Calu3 (cell line): ENCODE measurements at regions of chr4 and their contacts with region 1.

Region 1: GRCh38 chr4:42865572-42866189 is 26.8 kb upstream of the GRXCR1 start:
- DNase-seq: peak; percentile 44
- H3K4me3 Mint-ChIP-seq: no peak overlapping the region
- H3K27ac Mint-ChIP-seq: no peak overlapping the region
- H3K4me1 Mint-ChIP-seq: no peaks in the 10 kb centered on the region
- H3K27me3 Mint-ChIP-seq: no peaks in the 10 kb centered on the region
- CTCF ChIP-seq: peak; percentile 32

Region 2: GRCh38 chr4:42568610-42569207 is 297.0 kb before region 1 on chr4:
- CTCF ChIA-PET with region 1: interaction called, 3 read pairs
- intact Hi-C with region 1: loop called (anchors 1 kb)
- DNase-seq: peak; percentile 53
- H3K4me3 Mint-ChIP-seq: no peak overlapping the region
- H3K27ac Mint-ChIP-seq: no peak overlapping the region
- H3K4me1 Mint-ChIP-seq: no peaks in the 10 kb centered on the region
- H3K27me3 Mint-ChIP-seq: no peaks in the 10 kb centered on the region
- CTCF ChIP-seq: peak; percentile 29

Region 3: GRCh38 chr4:42906891-42907759 is 41.4 kb after region 1 on chr4:
- CTCF ChIA-PET with region 1: no interaction called
- intact Hi-C with region 1: no loop called
- DNase-seq: peak; percentile 12
- H3K4me3 Mint-ChIP-seq: no peak overlapping the region
- H3K27ac Mint-ChIP-seq: no peak overlapping the region
- H3K4me1 Mint-ChIP-seq: no peaks in the 10 kb centered on the region
- H3K27me3 Mint-ChIP-seq: no peaks in the 10 kb centered on the region
- CTCF ChIP-seq: no peak